CD8-positive, alpha-beta T cell (primary cell): ENCODE measurements at regions of chr11 and their contacts with region 1.

Region 1: DNA sequence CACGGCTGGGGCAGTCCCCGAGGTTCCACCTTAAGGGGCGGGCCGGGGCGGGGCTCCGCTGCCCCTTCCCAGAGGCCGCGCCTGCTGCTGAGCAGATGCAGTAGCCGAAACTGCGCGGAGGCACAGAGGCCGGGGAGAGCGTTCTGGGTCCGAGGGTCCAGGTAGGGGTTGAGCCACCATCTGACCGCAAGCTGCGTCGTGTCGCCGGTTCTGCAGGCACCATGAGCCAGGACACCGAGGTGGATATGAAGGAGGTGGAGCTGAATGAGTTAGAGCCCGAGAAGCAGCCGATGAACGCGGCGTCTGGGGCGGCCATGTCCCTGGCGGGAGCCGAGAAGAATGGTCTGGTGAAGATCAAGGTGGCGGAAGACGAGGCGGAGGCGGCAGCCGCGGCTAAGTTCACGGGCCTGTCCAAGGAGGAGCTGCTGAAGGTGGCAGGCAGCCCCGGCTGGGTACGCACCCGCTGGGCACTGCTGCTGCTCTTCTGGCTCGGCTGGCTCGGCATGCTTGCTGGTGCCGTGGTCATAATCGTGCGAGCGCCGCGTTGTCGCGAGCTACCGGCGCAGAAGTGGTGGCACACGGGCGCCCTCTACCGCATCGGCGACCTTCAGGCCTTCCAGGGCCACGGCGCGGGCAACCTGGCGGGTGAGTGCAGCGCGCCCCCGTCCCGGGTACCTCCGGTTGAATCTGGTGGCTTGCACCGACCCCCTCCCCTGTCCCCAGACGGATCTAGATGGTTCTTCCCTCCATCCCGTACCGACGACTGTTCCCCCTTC is at the start of gene SLC3A2:
- DNase-seq: peak; percentile 76 to 94 (median 85)
- ATAC-seq: peak; percentile 74
- H3K4me3 ChIP-seq: peak within 1 kb of the TSS; percentile 66 to 97
- H3K4me3 Mint-ChIP-seq: peak within 1 kb of the TSS; percentile 100
- H3K27ac ChIP-seq: peak within 1 kb of the TSS; percentile 94 to 99
- H3K27ac Mint-ChIP-seq: peak within 1 kb of the TSS; percentile 100
- H3K4me1 ChIP-seq: peaks cover 36% of the 10 kb centered on the region
- H3K4me1 Mint-ChIP-seq: peaks cover 50% of the 10 kb centered on the region
- H3K27me3 ChIP-seq: no peaks in the 10 kb centered on the region
- H3K27me3 Mint-ChIP-seq: no peaks in the 10 kb centered on the region
- CTCF ChIP-seq: peak; percentile 84
- total RNA-seq, gene SLC3A2: 212 to 245 TPM

Region 2: GRCh38 chr11:62601394-62602140 is 279.4 kb before region 1 on chr11 and contains the start of gene MTA2:
- CTCF ChIA-PET with region 1: no interaction called
- POLR2A ChIA-PET with region 1: interaction called, 4 read pairs
- intact Hi-C with region 1: loop called (anchors 2 kb)
- DNase-seq: peak; percentile 98 to 100 (median 99)
- ATAC-seq: peak; percentile 77
- H3K4me3 ChIP-seq: peak within 1 kb of the TSS; percentile 62 to 98
- H3K4me3 Mint-ChIP-seq: peak within 1 kb of the TSS; percentile 89
- H3K27ac ChIP-seq: peak within 1 kb of the TSS; percentile 83 to 86
- H3K27ac Mint-ChIP-seq: peak within 1 kb of the TSS; percentile 92
- H3K4me1 ChIP-seq: peaks cover 22% of the 10 kb centered on the region
- H3K4me1 Mint-ChIP-seq: peaks cover 57% of the 10 kb centered on the region
- H3K27me3 ChIP-seq: no peaks in the 10 kb centered on the region
- H3K27me3 Mint-ChIP-seq: no peaks in the 10 kb centered on the region
- CTCF ChIP-seq: no peak
- total RNA-seq, gene MTA2: 148 to 154 TPM

Region 3: GRCh38 chr11:62753736-62754603 is 127.0 kb before region 1 on chr11 and contains the start of gene ZBTB3:
- CTCF ChIA-PET with region 1: interaction called, 11 read pairs
- POLR2A ChIA-PET with region 1: interaction called, 14 read pairs
- intact Hi-C with region 1: no loop called
- DNase-seq: peak; percentile 93 to 100 (median 96)
- ATAC-seq: peak; percentile 93
- H3K4me3 ChIP-seq: peak within 1 kb of the TSS; percentile 72 to 88
- H3K4me3 Mint-ChIP-seq: peak within 1 kb of the TSS; percentile 99
- H3K27ac ChIP-seq: peak within 1 kb of the TSS; percentile 64 to 91
- H3K27ac Mint-ChIP-seq: peak within 1 kb of the TSS; percentile 98
- H3K4me1 ChIP-seq: peaks cover 28% of the 10 kb centered on the region
- H3K4me1 Mint-ChIP-seq: peaks cover 32% of the 10 kb centered on the region
- H3K27me3 ChIP-seq: no peaks in the 10 kb centered on the region
- H3K27me3 Mint-ChIP-seq: no peaks in the 10 kb centered on the region
- CTCF ChIP-seq: no peak
- total RNA-seq, gene ZBTB3: 3.7 to 4.8 TPM

Region 4: GRCh38 chr11:62805076-62805892 is 75.7 kb before region 1 on chr11 and contains the start of gene NXF1:
- CTCF ChIA-PET with region 1: no interaction called
- POLR2A ChIA-PET with region 1: interaction called, 7 read pairs
- intact Hi-C with region 1: loop called in 1 of 2 experiments (anchors 1 kb)
- DNase-seq: peak; percentile 92 to 99 (median 96)
- ATAC-seq: peak; percentile 86
- H3K4me3 ChIP-seq: peak within 1 kb of the TSS; percentile 74 to 88
- H3K4me3 Mint-ChIP-seq: peak within 1 kb of the TSS; percentile 100
- H3K27ac ChIP-seq: peak within 1 kb of the TSS; percentile 78 to 95
- H3K27ac Mint-ChIP-seq: peak within 1 kb of the TSS; percentile 99
- H3K4me1 ChIP-seq: peaks cover 20% of the 10 kb centered on the region
- H3K4me1 Mint-ChIP-seq: peaks cover 37% of the 10 kb centered on the region
- H3K27me3 ChIP-seq: no peaks in the 10 kb centered on the region
- H3K27me3 Mint-ChIP-seq: no peaks in the 10 kb centered on the region
- CTCF ChIP-seq: no peak
- total RNA-seq, gene NXF1: 356 TPM

Region 5: DNA sequence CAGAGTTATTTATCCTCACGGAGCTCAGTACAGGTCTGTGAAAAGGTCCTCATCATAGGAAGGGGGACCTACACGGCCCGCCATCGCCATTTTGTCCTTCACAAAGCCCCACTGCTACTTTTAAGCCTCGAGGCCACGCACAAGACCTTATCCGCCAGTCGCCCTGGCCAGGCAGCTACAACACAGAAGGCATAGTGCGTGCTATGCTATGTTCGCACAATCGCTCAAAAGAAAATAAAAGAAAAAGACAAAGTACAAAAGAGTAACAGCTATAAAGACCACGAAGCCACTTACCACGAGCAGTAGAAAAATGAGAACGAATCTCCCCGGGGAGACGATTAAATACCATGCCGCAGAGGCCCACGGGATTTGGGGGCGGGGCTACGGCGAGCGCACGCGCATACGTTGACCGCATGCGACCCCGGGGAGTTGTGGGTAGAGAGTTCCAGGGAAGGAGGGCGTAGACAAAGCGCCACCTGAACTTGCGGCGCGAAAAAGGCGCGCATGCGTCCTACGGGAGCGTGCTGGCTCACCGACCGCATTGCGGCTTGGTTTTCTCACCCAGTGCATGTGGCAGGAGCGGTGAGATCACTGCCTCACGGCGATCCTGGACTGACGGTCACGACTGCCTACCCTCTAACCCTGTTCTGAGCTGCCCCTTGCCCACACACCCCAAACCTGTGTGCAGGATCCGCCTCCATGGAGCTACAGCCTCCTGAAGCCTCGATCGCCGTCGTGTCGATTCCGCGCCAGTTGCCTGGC is 25.2 kb before region 1 on chr11:
- CTCF ChIA-PET with region 1: interaction called, 7 read pairs
- POLR2A ChIA-PET with region 1: interaction called, 66 read pairs
- intact Hi-C with region 1: no loop called
- DNase-seq: peak; percentile 96 to 100 (median 98)
- ATAC-seq: peak; percentile 91
- H3K4me3 ChIP-seq: peak overlapping the region; percentile 82 to 89
- H3K4me3 Mint-ChIP-seq: peak overlapping the region; percentile 96
- H3K27ac ChIP-seq: peak overlapping the region; percentile 76 to 84
- H3K27ac Mint-ChIP-seq: peak overlapping the region; percentile 91
- H3K4me1 ChIP-seq: peaks cover 36% of the 10 kb centered on the region
- H3K4me1 Mint-ChIP-seq: peaks cover 56% of the 10 kb centered on the region
- H3K27me3 ChIP-seq: no peaks in the 10 kb centered on the region
- H3K27me3 Mint-ChIP-seq: no peaks in the 10 kb centered on the region
- CTCF ChIP-seq: no peak